Activated CD4-positive, alpha-beta memory T cell treated with anti-CD3 and anti-CD28 coated beads, Interleukin-2, amount 10 ng/mL, durations not matched to agents 7 days and 5 days (primary cell): ENCODE measurements at regions of chr3 and their contacts with region 1.

Region 1: DNA sequence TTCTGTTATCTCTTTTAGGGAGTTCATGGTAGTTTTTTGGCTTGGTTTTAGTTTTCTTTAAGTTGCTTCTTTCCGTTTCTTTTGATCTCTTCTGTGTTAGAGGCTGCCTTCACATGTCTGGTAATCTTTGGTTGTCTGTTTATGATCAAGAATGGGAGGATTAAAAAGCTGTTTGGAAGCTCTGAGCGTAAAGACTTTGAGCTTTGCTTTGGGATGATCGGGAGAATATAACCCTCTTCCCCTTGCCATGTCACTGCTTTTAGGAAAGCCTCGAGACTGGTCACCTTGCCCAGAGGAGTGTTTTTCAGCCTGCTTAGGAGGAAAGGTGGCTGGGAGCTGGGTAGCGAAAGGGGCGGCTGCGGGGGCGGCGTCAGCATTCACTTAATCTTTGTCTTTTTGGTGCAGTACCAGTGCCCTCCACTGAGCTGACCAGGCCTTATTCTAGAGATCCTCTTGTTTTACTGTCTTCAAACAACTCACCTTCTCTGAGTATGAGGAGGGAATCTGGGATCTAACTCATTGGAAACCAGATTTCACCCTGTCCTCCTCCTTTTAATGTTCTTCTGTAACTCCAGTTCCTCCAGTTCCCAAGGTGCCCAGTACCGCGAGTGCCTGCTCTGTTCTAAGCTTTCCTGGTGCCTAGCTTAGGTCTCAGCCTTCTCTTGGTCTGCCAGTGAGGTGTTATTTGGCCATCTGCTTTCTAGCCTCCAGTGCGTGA is 15.5 kb downstream of the TATDN2 start:
- DNase-seq: peak; percentile 72
- H3K4me3 Mint-ChIP-seq: peak overlapping the region; percentile 52
- H3K27ac Mint-ChIP-seq: peak overlapping the region; percentile 59
- H3K4me1 Mint-ChIP-seq: peaks cover 72% of the 10 kb centered on the region
- H3K27me3 Mint-ChIP-seq: no peaks in the 10 kb centered on the region

Region 2: DNA sequence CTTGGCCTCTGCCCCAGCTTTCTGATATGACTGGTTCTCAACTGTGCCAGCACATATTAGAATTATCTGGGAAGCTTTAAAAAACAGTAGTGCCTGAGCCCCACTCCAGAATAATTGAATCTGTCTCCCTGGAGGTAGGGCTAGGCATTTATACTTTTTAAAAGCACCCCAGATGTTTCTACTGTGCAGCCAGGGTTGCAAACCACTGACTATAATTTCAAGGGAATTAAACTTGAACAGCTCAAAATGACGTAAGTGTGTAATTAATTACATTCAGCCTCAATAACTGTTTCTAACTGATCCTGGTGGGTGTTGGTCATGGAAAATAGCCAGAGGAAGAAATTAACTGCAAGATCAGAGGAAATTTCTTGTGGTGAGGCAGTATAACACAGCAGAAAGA is 103.5 kb before region 1 on chr3:
- CTCF ChIA-PET with region 1: interaction called, 10 read pairs
- POLR2A ChIA-PET with region 1: interaction called, 5 read pairs
- DNase-seq: no peak
- H3K4me3 Mint-ChIP-seq: no peak overlapping the region
- H3K27ac Mint-ChIP-seq: no peak overlapping the region
- H3K4me1 Mint-ChIP-seq: peaks cover 11% of the 10 kb centered on the region
- H3K27me3 Mint-ChIP-seq: no peaks in the 10 kb centered on the region

Region 3: GRCh38 chr3:10224784-10225665 is 38.8 kb before region 1 on chr3:
- CTCF ChIA-PET with region 1: interaction called, 12 read pairs
- POLR2A ChIA-PET with region 1: interaction called, 11 read pairs
- DNase-seq: peak; percentile 76
- H3K4me3 Mint-ChIP-seq: peak overlapping the region; percentile 1
- H3K27ac Mint-ChIP-seq: peak overlapping the region; percentile 65
- H3K4me1 Mint-ChIP-seq: peaks cover 81% of the 10 kb centered on the region
- H3K27me3 Mint-ChIP-seq: no peaks in the 10 kb centered on the region

Region 4: GRCh38 chr3:10248184-10249080 is 15.4 kb before region 1 on chr3 and contains the start of gene TATDN2:
- CTCF ChIA-PET with region 1: interaction called, 27 read pairs
- POLR2A ChIA-PET with region 1: interaction called, 13 read pairs
- DNase-seq: peak; percentile 96
- H3K4me3 Mint-ChIP-seq: peak within 1 kb of the TSS; percentile 98
- H3K27ac Mint-ChIP-seq: peak within 1 kb of the TSS; percentile 92
- H3K4me1 Mint-ChIP-seq: peaks cover 55% of the 10 kb centered on the region
- H3K27me3 Mint-ChIP-seq: no peaks in the 10 kb centered on the region
- total RNA-seq, gene TATDN2: 57.1 to 59.5 TPM

Region 5: DNA sequence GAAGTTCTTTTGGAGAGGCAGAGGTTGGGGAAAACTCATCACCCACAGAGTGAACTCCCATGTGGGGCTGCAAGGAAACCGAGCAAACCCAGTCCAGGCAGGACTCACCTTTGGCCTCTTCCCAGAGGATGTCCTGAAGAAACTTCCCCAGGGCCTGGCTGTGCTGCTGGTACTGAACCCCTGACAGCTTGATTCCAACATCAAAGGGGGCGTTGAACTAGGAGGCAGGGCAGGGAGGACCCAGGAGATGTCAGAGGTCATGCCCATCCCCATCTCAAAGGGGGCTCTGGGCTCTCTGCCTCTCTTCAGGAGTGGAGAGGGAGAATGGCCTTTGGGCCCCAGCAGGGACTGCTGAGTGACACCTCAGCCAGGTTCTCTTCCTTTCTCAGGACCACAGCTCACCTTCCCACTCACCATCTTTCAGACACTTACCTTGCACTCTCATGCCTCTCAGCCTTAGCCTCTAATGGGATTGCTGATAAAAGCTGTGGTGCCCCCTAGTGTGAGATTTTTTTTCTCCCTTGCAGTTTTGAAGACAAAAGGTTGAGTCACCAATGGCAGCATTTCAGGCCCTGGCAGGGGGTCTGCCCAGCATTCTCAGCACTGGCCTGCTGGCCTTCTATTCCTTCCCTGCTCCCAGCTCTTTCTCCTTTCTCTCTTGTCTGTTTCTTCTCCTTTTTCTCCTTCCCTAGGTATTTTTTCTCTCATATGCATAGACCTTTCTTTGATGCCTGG is 23.0 kb after region 1 on chr3:
- CTCF ChIA-PET with region 1: interaction called, 7 read pairs
- POLR2A ChIA-PET with region 1: interaction called, 16 read pairs
- DNase-seq: peak; percentile 45
- H3K4me3 Mint-ChIP-seq: no peak overlapping the region
- H3K27ac Mint-ChIP-seq: peak overlapping the region; percentile 14
- H3K4me1 Mint-ChIP-seq: peaks cover 42% of the 10 kb centered on the region
- H3K27me3 Mint-ChIP-seq: no peaks in the 10 kb centered on the region

Region 6: DNA sequence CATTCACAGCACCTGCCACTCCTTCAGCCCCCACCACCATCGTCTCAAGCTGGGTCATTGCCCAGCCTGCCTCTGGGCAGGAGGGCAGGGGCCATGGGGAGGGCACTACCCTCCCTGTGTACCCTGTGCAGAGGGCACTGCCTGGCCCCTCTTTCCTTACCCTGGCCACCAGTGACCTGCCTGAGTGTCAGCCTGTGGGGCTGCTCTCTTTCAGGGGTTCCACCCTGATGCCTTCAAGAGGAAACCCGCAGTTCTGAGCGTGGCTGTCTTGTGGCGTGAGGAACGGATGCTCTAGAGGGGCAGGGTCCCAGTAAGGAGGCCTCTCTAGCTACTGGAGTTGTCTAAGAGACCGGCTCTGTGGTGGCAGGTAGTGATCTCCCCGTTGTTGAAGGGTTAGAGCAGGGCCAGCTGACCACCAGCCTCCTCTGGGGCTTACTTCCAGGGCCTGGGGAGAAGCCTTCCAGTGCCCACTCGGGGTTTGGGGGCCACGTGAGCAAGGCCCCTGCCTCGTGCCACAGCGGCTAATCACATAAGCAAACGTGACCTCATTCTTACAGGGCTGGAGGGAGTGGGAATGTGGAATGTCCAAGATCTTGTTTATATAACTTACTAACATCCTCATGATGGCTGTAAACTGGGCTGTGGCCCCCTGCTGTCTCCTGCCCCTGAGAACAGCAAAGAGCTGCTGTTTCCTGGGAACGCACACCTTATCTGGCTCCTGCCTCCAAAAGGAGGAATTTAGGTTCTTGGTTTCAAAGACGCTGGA is 88.5 kb after region 1 on chr3:
- CTCF ChIA-PET with region 1: no interaction called
- POLR2A ChIA-PET with region 1: no interaction called
- DNase-seq: no peak
- H3K4me3 Mint-ChIP-seq: no peak overlapping the region
- H3K27ac Mint-ChIP-seq: no peak overlapping the region
- H3K4me1 Mint-ChIP-seq: peaks cover 2% of the 10 kb centered on the region
- H3K27me3 Mint-ChIP-seq: peaks cover 10% of the 10 kb centered on the region

Region 7: GRCh38 chr3:10366651-10367101 is 102.9 kb after region 1 on chr3:
- CTCF ChIA-PET with region 1: no interaction called
- POLR2A ChIA-PET with region 1: no interaction called
- DNase-seq: peak; percentile 70
- H3K4me3 Mint-ChIP-seq: no peak overlapping the region
- H3K27ac Mint-ChIP-seq: peak overlapping the region; percentile 55
- H3K4me1 Mint-ChIP-seq: peaks cover 40% of the 10 kb centered on the region
- H3K27me3 Mint-ChIP-seq: peaks cover 3% of the 10 kb centered on the region